CD4-positive, alpha-beta T cell (primary cell): ENCODE measurements at regions of chr17 and their contacts with region 1.

Region 1: DNA sequence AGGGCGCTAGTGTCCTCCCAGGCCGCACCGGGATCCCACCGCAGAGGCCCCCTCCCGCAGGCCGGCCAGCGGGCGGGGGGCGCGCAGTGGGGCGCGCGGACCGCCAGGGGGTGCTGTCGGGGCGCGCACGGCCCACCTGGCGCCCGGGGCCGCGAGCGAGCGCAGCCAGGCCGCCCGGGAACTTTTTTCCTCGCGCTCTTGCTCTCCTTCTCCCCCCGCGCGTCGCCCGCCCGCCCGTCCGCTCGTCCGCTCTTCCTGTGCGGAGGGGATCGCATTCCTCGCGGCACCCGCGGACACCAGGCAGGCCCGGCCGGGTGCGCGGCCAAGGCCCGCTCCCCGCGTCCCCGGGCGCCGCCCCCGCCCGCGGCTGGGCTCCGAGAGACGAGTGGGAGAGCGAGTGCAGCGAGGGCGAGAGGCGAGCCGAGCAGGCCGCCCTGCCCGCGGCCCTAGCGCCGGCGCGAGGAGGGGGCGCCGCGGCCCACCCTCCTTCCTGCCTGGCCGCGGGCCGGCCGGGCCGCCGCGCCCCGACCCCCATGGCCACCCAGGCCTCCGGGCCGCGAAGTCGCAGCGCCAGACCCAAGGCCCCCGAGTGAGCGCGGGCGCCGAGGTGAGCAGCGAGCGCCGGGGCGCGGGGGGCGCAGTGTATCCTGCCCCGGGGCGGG is at the start of gene RAI1:
- DNase-seq: peak; percentile 40 to 92 (median 67)
- ATAC-seq: peak; percentile 65
- H3K4me3 ChIP-seq: peak within 1 kb of the TSS; percentile 75
- H3K4me3 Mint-ChIP-seq: peak within 1 kb of the TSS; percentile 89
- H3K27ac ChIP-seq: peak within 1 kb of the TSS in 1 of 2 donors; percentile 81
- H3K27ac Mint-ChIP-seq: peak within 1 kb of the TSS; percentile 36
- H3K4me1 ChIP-seq: peaks cover 36% of the 10 kb centered on the region
- H3K4me1 Mint-ChIP-seq: peaks cover 44% of the 10 kb centered on the region
- H3K27me3 ChIP-seq: no peaks in the 10 kb centered on the region
- H3K27me3 Mint-ChIP-seq: no peaks in the 10 kb centered on the region
- CTCF ChIP-seq: peak; percentile 10
- total RNA-seq, gene RAI1: 19.3 to 25.2 TPM

Region 2: GRCh38 chr17:17648762-17649161 is 32.6 kb before region 1 on chr17:
- CTCF ChIA-PET with region 1: no interaction called
- POLR2A ChIA-PET with region 1: no interaction called
- intact Hi-C with region 1: no loop called
- DNase-seq: no peak
- ATAC-seq: no peak
- H3K4me3 ChIP-seq: no peak overlapping the region
- H3K4me3 Mint-ChIP-seq: no peak overlapping the region
- H3K27ac ChIP-seq: no peak overlapping the region
- H3K27ac Mint-ChIP-seq: no peak overlapping the region
- H3K4me1 ChIP-seq: no peaks in the 10 kb centered on the region
- H3K4me1 Mint-ChIP-seq: no peaks in the 10 kb centered on the region
- H3K27me3 ChIP-seq: no peaks in the 10 kb centered on the region
- H3K27me3 Mint-ChIP-seq: peaks cover 8% of the 10 kb centered on the region
- CTCF ChIP-seq: no peak

Region 3: GRCh38 chr17:17694169-17695081 is 13.1 kb after region 1 on chr17:
- CTCF ChIA-PET with region 1: no interaction called
- POLR2A ChIA-PET with region 1: interaction called, 20 read pairs
- intact Hi-C with region 1: loop called in 1 of 2 experiments (anchors 1 kb)
- DNase-seq: peak; percentile 43 to 89 (median 63)
- ATAC-seq: peak; percentile 72
- H3K4me3 ChIP-seq: peak overlapping the region; percentile 76
- H3K4me3 Mint-ChIP-seq: peak overlapping the region; percentile 94
- H3K27ac ChIP-seq: peak overlapping the region; percentile 91 to 95
- H3K27ac Mint-ChIP-seq: peak overlapping the region; percentile 96
- H3K4me1 ChIP-seq: peaks cover 61% of the 10 kb centered on the region
- H3K4me1 Mint-ChIP-seq: peaks cover 62% of the 10 kb centered on the region
- H3K27me3 ChIP-seq: no peaks in the 10 kb centered on the region
- H3K27me3 Mint-ChIP-seq: no peaks in the 10 kb centered on the region
- CTCF ChIP-seq: no peak

Region 4: DNA sequence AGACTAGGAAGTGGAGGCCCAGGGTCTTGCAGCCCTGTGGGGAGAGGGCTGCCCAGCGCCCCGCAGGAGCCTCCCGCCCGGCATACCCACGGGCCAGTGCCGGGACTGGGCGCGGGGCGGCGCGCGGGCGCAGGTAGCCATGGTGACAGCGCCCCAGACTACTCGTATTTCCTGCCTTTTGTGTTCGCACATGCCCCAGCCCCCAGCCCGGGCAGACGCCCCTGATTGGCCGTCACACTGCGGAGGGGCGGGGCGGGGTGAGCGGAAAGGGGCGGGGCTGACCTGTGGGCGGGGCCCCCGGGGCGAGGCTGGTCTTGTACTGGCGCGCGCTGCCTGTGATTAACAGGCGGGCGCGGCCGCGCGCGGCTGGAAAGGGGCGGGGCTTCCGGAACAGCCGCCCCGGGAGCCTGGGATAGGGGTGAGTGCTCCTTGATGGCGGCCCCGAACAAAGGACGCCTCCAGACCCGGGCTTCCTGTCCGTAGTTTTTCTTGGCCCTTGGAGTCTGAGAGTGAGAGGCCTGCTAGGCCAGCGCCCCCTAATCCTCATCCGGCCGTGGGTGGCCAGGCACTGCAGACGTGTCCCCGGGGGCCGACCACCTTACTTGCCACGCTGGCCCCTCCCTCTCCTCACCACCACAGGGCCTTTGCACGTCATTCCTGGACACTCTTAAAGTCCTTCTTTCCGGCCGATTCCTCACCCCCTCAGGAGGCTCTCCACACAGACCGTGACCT is 70.9 kb after region 1 on chr17:
- CTCF ChIA-PET with region 1: no interaction called
- POLR2A ChIA-PET with region 1: interaction called, 4 read pairs
- intact Hi-C with region 1: loop called in 1 of 2 experiments (anchors 1 kb)
- DNase-seq: peak; percentile 94 to 98 (median 97)
- ATAC-seq: peak; percentile 82
- H3K4me3 ChIP-seq: peak overlapping the region; percentile 87
- H3K4me3 Mint-ChIP-seq: peak overlapping the region; percentile 67
- H3K27ac ChIP-seq: peak overlapping the region; percentile 89 to 90
- H3K27ac Mint-ChIP-seq: peak overlapping the region; percentile 95
- H3K4me1 ChIP-seq: peaks cover 83% of the 10 kb centered on the region
- H3K4me1 Mint-ChIP-seq: peaks cover 81% of the 10 kb centered on the region
- H3K27me3 ChIP-seq: no peaks in the 10 kb centered on the region
- H3K27me3 Mint-ChIP-seq: no peaks in the 10 kb centered on the region
- CTCF ChIP-seq: peak; percentile 58

Region 5: DNA sequence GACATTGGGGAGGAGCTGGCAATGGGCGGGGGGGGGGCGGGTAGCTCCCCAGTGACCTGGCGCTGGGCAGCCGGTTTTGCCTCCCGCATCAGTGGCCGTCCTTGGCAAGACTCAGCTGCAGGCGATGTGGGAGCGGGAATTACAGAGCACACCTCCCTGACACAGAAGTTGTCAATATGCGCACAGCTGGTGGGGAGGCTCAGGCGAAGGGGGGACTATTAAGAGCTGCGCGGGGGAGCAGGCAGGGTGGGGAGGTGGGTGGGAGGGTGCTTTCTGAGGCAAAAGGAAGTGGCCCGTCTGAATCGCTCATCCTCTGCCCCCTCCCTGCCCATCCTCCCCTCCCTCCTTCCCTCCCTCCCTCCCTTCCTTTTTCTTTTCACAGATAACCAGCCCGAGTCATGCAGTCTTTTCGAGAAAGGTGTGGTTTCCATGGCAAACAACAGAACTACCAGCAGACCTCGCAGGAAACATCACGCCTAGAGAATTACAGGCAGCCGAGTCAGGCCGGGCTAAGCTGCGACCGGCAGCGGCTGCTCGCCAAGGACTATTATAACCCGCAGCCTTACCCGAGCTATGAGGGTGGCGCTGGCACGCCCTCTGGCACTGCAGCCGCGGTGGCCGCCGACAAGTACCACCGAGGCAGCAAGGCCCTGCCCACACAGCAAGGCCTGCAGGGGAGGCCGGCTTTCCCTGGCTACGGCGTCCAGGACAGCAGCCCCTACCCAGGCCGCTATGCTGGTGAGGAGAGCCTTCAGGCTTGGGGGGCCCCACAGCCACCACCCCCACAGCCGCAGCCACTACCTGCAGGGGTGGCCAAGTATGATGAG is 111.4 kb after region 1 on chr17:
- CTCF ChIA-PET with region 1: no interaction called
- POLR2A ChIA-PET with region 1: interaction called, 5 read pairs
- intact Hi-C with region 1: loop called in 1 of 2 experiments (anchors 5 kb)
- DNase-seq: peak; percentile 26 to 91 (median 56)
- ATAC-seq: peak; percentile 86
- H3K4me3 ChIP-seq: peak overlapping the region; percentile 22
- H3K4me3 Mint-ChIP-seq: peak overlapping the region; percentile 75
- H3K27ac ChIP-seq: peak overlapping the region; percentile 44 to 47
- H3K27ac Mint-ChIP-seq: peak overlapping the region; percentile 71
- H3K4me1 ChIP-seq: peaks cover 32% of the 10 kb centered on the region
- H3K4me1 Mint-ChIP-seq: peaks cover 25% of the 10 kb centered on the region
- H3K27me3 ChIP-seq: no peaks in the 10 kb centered on the region
- H3K27me3 Mint-ChIP-seq: no peaks in the 10 kb centered on the region
- CTCF ChIP-seq: no peak

Region 6: DNA sequence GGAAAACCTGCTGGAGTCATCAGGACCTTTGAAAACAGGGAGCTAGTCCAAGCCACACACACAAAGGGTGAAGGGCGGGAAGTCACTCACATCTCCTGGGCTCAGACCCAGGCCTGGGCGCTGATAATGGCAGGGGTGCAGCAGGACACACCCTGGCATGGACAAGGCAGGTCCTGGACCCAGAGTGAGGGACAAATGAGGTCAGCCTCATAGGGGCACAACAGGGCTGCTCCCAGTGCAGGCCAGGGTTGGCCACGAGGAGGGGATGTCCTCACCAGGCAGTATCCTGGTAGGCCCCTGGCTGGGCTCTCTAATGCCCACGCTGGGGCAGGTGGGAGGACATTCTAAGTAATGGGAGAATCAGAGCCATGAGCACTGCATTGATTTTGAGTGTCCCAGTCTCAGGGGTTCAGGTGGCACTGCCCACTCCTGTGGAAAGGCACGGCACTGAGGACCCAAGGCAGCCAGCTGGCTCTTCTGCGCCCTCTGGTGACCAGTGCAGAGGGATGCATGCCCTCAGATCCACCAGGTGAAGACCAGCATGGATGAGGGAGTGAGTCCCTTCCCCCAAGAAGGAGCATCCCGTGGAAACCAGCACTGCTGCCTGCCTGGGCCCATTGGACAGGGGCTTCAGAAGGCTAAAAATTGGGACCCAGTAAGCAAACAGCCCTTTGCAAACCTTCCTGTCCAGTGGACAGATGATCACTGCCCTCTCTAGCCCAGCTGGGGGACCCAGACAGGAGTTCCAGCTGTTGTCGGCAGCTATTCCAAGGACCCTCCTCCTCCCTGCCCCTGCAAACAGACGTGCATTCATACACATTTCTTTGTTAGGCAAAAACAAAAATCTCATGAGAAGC is 178.8 kb after region 1 on chr17:
- CTCF ChIA-PET with region 1: interaction called, 4 read pairs
- POLR2A ChIA-PET with region 1: interaction called, 5 read pairs
- intact Hi-C with region 1: loop called (anchors 1 kb)
- DNase-seq: peak; percentile 53 to 86 (median 65)
- ATAC-seq: peak; percentile 97
- H3K4me3 ChIP-seq: no peak overlapping the region
- H3K4me3 Mint-ChIP-seq: no peak overlapping the region
- H3K27ac ChIP-seq: no peak overlapping the region
- H3K27ac Mint-ChIP-seq: no peak overlapping the region
- H3K4me1 ChIP-seq: peaks cover 29% of the 10 kb centered on the region
- H3K4me1 Mint-ChIP-seq: peaks cover 34% of the 10 kb centered on the region
- H3K27me3 ChIP-seq: no peaks in the 10 kb centered on the region
- H3K27me3 Mint-ChIP-seq: no peaks in the 10 kb centered on the region
- CTCF ChIP-seq: peak; percentile 97

Region 7: DNA sequence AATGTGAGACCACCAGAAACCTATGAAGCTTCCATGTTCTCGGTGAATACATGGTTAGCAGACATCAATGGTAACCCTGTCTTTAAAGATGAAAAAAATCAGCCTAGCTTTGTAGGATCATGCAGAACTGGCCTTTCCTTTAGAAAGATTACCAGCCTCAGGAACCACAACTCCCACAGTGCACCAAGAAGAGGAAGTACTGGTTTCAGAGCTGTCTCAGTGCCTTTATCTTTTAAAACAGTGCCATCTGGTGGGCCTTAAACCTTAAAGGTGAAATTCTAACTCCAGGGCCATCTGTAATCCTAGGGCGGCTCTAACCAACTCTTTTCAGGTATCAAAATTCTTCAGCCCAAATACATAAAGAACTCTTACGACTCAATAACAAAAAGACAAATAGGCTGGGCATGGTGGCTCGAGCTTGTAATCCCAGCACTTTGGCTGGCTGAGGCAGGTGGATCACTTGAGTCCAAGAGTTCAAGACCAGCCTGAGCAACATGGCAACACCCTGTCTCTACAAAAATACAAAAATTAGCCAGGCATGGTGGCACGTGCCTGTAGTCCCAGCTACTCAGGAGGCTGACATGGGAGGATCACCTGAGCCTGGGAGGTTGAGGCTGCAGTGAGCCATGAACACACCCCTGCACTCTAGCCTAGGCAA is 352.3 kb after region 1 on chr17:
- CTCF ChIA-PET with region 1: no interaction called
- POLR2A ChIA-PET with region 1: interaction called, 5 read pairs
- intact Hi-C with region 1: loop called (anchors 1 kb)
- DNase-seq: peak in 11 of 14 experiments; percentile 11 to 87 (median 46)
- ATAC-seq: peak; percentile 98
- H3K4me3 ChIP-seq: no peak overlapping the region
- H3K4me3 Mint-ChIP-seq: peak overlapping the region; percentile 77
- H3K27ac ChIP-seq: no peak overlapping the region
- H3K27ac Mint-ChIP-seq: peak overlapping the region; percentile 60
- H3K4me1 ChIP-seq: peaks cover 28% of the 10 kb centered on the region
- H3K4me1 Mint-ChIP-seq: peaks cover 30% of the 10 kb centered on the region
- H3K27me3 ChIP-seq: no peaks in the 10 kb centered on the region
- H3K27me3 Mint-ChIP-seq: no peaks in the 10 kb centered on the region
- CTCF ChIP-seq: peak; percentile 69